Naive thymus-derived CD4-positive, alpha-beta T cell (primary cell): ENCODE measurements at regions of chr2 and their contacts with region 1.

Region 1: DNA sequence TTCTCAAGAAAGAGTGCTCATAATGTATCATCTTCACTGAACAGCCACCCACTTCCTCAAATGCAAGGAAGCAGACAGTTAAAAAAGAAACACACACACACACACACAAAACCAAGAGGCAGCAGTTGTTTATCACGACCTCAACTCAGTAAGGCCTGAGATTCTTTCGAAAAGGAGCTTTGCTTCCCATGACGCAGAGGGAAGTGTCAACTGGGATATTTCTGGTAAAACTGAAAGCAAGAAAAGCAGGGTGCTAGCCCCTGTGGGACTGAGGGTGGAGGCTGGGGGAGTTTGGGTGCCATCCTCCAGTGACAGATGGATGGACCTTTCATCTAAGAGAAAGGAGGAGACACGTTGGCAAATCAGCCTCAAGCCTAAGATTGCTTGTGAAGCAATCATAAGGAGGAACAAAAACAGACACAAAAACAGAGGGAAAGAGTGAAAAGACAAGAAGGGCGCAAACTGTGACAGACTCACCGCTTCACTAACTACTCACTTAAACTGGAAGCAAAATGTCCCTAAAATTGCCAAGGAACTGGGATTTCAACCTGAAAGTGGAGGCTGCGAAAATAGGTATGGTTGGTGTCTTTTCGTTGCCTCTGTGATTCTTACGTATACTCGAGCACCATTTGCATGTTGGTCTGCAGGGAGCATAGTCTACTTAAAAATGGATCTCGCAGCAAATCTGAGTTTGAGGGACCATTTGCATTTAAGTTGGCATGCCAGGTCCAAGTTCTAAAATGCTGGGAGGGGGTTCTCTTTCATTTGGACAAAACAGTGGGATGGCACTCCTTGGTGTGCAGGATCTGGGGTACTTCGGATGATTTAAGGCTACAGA is at the start of gene ARHGAP25:
- DNase-seq: peak; percentile 20 to 81 (median 69)
- ATAC-seq: peak; percentile 78
- H3K4me3 ChIP-seq: peak within 1 kb of the TSS; percentile 77
- H3K4me3 Mint-ChIP-seq: no peak within 1 kb of the TSS
- H3K27ac ChIP-seq: peak within 1 kb of the TSS; percentile 78
- H3K27ac Mint-ChIP-seq: no peak within 1 kb of the TSS
- H3K4me1 ChIP-seq: peaks cover 38 to 48% of the 10 kb centered on the region in 2 donors
- H3K4me1 Mint-ChIP-seq: peaks cover 23 to 37% (median 32%) of the 10 kb centered on the region in 7 donors
- H3K27me3 ChIP-seq: no peaks in the 10 kb centered on the region
- H3K27me3 Mint-ChIP-seq: no peaks in the 10 kb centered on the region
- total RNA-seq, gene ARHGAP25: 68.2 to 139 (median 116) TPM

Region 2: DNA sequence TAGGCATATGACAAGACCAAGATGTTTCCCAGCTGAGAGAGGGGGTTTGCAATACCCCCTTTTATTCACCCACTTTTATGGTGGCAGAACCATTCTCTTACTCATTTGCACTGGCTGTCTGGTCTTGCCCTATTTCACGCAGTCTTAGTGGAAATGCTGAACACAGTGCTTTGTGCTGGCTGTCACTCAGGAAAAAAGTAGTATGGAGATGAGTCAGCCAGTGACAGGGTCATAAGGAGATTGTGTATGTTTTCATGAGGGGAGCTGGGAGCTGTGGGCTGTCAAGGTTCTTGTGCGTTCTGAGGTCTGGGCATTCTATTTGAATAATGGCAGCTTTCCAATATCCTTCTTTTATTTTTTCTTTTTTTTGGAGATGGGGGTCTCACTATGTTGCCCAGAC is 404.2 kb before region 1 on chr2:
- CTCF ChIA-PET with region 1: no interaction called
- POLR2A ChIA-PET with region 1: no interaction called
- intact Hi-C with region 1: no loop called
- DNase-seq: no peak
- ATAC-seq: no peak
- H3K4me3 ChIP-seq: no peak overlapping the region
- H3K4me3 Mint-ChIP-seq: no peak overlapping the region
- H3K27ac ChIP-seq: no peak overlapping the region
- H3K27ac Mint-ChIP-seq: no peak overlapping the region
- H3K4me1 ChIP-seq: no peaks in the 10 kb centered on the region
- H3K4me1 Mint-ChIP-seq: no peaks in the 10 kb centered on the region
- H3K27me3 ChIP-seq: no peaks in the 10 kb centered on the region
- H3K27me3 Mint-ChIP-seq: peaks cover 13 to 37% (median 34%) of the 10 kb centered on the region in 5 donors

Region 3: GRCh38 chr2:68605939-68606338 is 129.0 kb before region 1 on chr2:
- CTCF ChIA-PET with region 1: no interaction called
- POLR2A ChIA-PET with region 1: no interaction called
- intact Hi-C with region 1: no loop called
- DNase-seq: no peak
- ATAC-seq: no peak
- H3K4me3 ChIP-seq: no peak overlapping the region
- H3K4me3 Mint-ChIP-seq: no peak overlapping the region
- H3K27ac ChIP-seq: no peak overlapping the region
- H3K27ac Mint-ChIP-seq: no peak overlapping the region
- H3K4me1 ChIP-seq: no peaks in the 10 kb centered on the region
- H3K4me1 Mint-ChIP-seq: peaks cover 0 to 7% (median 0%) of the 10 kb centered on the region in 7 donors
- H3K27me3 ChIP-seq: peaks cover 0 to 3% of the 10 kb centered on the region in 2 donors
- H3K27me3 Mint-ChIP-seq: peaks cover 0 to 26% (median 0%) of the 10 kb centered on the region in 5 donors

Region 4: GRCh38 chr2:68721482-68722101 is 13.3 kb before region 1 on chr2:
- CTCF ChIA-PET with region 1: interaction called, 33 read pairs
- POLR2A ChIA-PET with region 1: interaction called, 114 read pairs
- intact Hi-C with region 1: loop called (anchors 1 kb)
- DNase-seq: peak in 7 of 9 donors; percentile 52 to 69 (median 61)
- ATAC-seq: peak; percentile 83
- H3K4me3 ChIP-seq: peak overlapping the region; percentile 9
- H3K4me3 Mint-ChIP-seq: peak overlapping the region; percentile 76 to 91 (median 82)
- H3K27ac ChIP-seq: peak overlapping the region; percentile 68
- H3K27ac Mint-ChIP-seq: peak overlapping the region; percentile 78 to 97 (median 95)
- H3K4me1 ChIP-seq: peaks cover 72 to 87% of the 10 kb centered on the region in 2 donors
- H3K4me1 Mint-ChIP-seq: peaks cover 65 to 96% (median 93%) of the 10 kb centered on the region in 7 donors
- H3K27me3 ChIP-seq: no peaks in the 10 kb centered on the region
- H3K27me3 Mint-ChIP-seq: no peaks in the 10 kb centered on the region

Region 5: DNA sequence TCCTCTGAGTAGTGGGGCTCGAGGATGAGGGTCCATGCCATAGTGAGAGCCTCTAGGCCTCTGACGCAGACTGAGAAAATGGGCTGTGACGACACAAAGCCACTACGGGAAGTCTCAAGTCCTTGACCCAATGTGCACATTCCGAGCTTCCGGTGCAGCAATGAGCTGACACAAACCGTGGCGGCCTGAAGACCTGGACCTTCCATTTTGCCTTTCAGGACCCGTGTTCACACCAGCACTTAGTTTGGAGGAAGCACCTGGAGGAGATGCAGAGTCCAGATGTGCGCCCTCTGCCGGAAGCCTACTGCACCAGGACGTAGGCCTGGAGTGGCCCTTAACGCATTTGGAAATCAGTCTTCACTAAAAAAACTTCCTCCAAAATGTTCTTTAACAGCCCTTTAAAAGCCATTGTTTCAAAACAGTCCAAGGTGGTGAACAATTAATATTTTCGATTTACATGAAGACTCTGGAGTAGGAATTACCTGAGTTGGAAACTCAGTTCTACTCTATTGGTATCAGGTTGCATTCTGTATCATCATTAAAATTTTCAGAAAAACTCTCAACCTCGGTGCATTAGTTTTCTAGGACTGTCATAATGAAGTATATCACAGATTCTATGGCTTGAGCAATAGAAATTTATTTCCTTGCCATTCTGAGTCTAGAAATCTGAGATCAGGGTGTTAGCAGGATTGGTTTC is 102.4 kb after region 1 on chr2:
- CTCF ChIA-PET with region 1: interaction called, 3 read pairs
- POLR2A ChIA-PET with region 1: interaction called, 4 read pairs
- intact Hi-C with region 1: loop called in 1 of 2 experiments (anchors 1 kb)
- DNase-seq: peak; percentile 25 to 67 (median 57)
- ATAC-seq: peak; percentile 77
- H3K4me3 ChIP-seq: no peak overlapping the region
- H3K4me3 Mint-ChIP-seq: no peak overlapping the region
- H3K27ac ChIP-seq: no peak overlapping the region
- H3K27ac Mint-ChIP-seq: peak overlapping the region in 2 of 9 donors; percentile 15 to 75
- H3K4me1 ChIP-seq: peaks cover 0 to 13% of the 10 kb centered on the region in 2 donors
- H3K4me1 Mint-ChIP-seq: peaks cover 15 to 51% (median 43%) of the 10 kb centered on the region in 7 donors
- H3K27me3 ChIP-seq: no peaks in the 10 kb centered on the region
- H3K27me3 Mint-ChIP-seq: no peaks in the 10 kb centered on the region

Region 6: DNA sequence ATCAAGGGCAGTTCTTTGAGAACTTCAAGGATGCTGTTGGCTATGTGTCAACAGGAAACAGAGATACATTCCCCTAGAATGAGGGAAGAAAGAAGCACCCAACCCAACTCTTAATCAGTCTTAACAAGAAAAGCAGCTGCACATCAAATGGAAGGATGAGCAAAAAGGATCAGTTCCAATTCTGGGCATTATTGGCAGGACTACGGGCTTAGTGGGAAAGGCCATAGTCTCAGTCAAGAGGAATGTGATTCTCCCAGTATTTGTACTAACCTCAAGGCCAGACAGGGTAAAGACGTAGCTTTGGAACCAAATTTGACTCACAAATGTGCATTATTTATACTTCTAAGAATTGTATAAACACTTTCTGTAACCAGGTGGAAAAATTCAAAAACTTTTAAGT is 118.1 kb after region 1 on chr2:
- CTCF ChIA-PET with region 1: no interaction called
- POLR2A ChIA-PET with region 1: no interaction called
- intact Hi-C with region 1: no loop called
- DNase-seq: no peak
- ATAC-seq: no peak
- H3K4me3 ChIP-seq: no peak overlapping the region
- H3K4me3 Mint-ChIP-seq: no peak overlapping the region
- H3K27ac ChIP-seq: no peak overlapping the region
- H3K27ac Mint-ChIP-seq: no peak overlapping the region
- H3K4me1 ChIP-seq: no peaks in the 10 kb centered on the region
- H3K4me1 Mint-ChIP-seq: peaks cover 0 to 6% (median 0%) of the 10 kb centered on the region in 7 donors
- H3K27me3 ChIP-seq: no peaks in the 10 kb centered on the region
- H3K27me3 Mint-ChIP-seq: peaks cover 0 to 34% (median 9%) of the 10 kb centered on the region in 5 donors